ENCODE measurements at regions of chr12 and their contacts with region 1.

Region 1: DNA sequence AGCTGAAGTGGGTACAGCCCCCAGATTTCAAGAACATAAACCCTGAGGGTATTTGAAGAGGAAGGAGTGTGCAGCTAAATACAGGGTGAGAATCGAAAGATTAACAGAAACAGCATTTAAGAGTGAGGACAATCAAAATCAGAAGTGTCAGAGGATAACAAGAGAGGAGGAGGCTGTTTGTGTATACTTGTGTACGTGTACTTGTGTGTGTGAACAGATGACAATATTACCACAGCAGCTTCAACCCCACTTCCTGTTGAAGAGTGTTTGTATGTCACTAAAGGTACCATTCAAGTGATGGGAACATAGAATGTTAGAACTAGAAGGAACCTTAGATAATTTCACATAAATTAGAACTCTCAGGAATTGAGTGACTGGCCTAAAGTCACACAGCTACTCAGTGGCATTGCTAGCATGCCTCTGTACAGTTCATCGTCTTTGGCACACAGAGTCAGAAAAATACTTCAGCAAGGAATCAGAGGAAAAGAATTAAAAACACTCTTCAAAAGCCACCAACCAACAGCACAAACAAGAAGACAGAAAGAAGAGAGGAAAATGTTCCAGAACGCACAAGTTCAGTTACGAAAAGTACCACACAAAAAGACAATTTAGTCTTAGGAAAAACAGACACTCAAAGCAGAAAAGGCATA is 164.3 kb upstream of the BCL2L14 start:
- DNase-seq: no peak
- ATAC-seq: no peak
- H3K4me3 Mint-ChIP-seq: no peak overlapping the region
- H3K27ac Mint-ChIP-seq: no peak overlapping the region
- H3K4me1 Mint-ChIP-seq: peaks cover 34% of the 10 kb centered on the region
- H3K27me3 Mint-ChIP-seq: peaks cover 4% of the 10 kb centered on the region
- CTCF ChIP-seq: no peak

Region 2: GRCh38 chr12:11922361-11922760 is 15.9 kb after region 1 on chr12:
- CTCF ChIA-PET with region 1: no interaction called
- POLR2A ChIA-PET with region 1: no interaction called
- intact Hi-C with region 1: no loop called
- DNase-seq: no peak
- ATAC-seq: no peak
- H3K4me3 Mint-ChIP-seq: no peak overlapping the region
- H3K27ac Mint-ChIP-seq: no peak overlapping the region
- H3K4me1 Mint-ChIP-seq: no peaks in the 10 kb centered on the region
- H3K27me3 Mint-ChIP-seq: no peaks in the 10 kb centered on the region
- CTCF ChIP-seq: no peak

Region 3: GRCh38 chr12:11981121-11981733 is 74.8 kb after region 1 on chr12:
- CTCF ChIA-PET with region 1: no interaction called
- POLR2A ChIA-PET with region 1: no interaction called
- intact Hi-C with region 1: loop called (anchors 2 kb)
- DNase-seq: peak; percentile 63
- ATAC-seq: peak; percentile 80
- H3K4me3 Mint-ChIP-seq: peak overlapping the region; percentile 48
- H3K27ac Mint-ChIP-seq: peak overlapping the region; percentile 99
- H3K4me1 Mint-ChIP-seq: peaks cover 47% of the 10 kb centered on the region
- H3K27me3 Mint-ChIP-seq: no peaks in the 10 kb centered on the region
- CTCF ChIP-seq: no peak